ENCODE measurements at regions of chr3 and their contacts with region 1.

Region 1: GRCh38 chr3:31589228-31589627 is 56.5 kb downstream of the STT3B start:
- DNase-seq: no peak
- ATAC-seq: no peak
- H3K4me3 ChIP-seq: no peak overlapping the region
- H3K4me3 Mint-ChIP-seq: no peak overlapping the region
- H3K27ac ChIP-seq: no peak overlapping the region
- H3K27ac Mint-ChIP-seq: no peak overlapping the region
- H3K4me1 ChIP-seq: no peaks in the 10 kb centered on the region
- H3K4me1 Mint-ChIP-seq: peaks cover 52% of the 10 kb centered on the region
- H3K27me3 ChIP-seq: no peaks in the 10 kb centered on the region
- H3K27me3 Mint-ChIP-seq: no peaks in the 10 kb centered on the region
- CTCF ChIP-seq: no peak

Region 2: GRCh38 chr3:31412832-31413231 is 176.4 kb before region 1 on chr3:
- CTCF ChIA-PET with region 1: no interaction called
- POLR2A ChIA-PET with region 1: no interaction called
- intact Hi-C with region 1: no loop called
- DNase-seq: no peak
- ATAC-seq: no peak
- H3K4me3 ChIP-seq: no peak overlapping the region
- H3K4me3 Mint-ChIP-seq: no peak overlapping the region
- H3K27ac ChIP-seq: no peak overlapping the region
- H3K27ac Mint-ChIP-seq: no peak overlapping the region
- H3K4me1 ChIP-seq: no peaks in the 10 kb centered on the region
- H3K4me1 Mint-ChIP-seq: peaks cover 9% of the 10 kb centered on the region
- H3K27me3 ChIP-seq: peaks cover 0 to 2% of the 10 kb centered on the region in 2 experiments
- H3K27me3 Mint-ChIP-seq: no peaks in the 10 kb centered on the region
- CTCF ChIP-seq: no peak

Region 3: GRCh38 chr3:31575448-31575847 is 13.8 kb before region 1 on chr3:
- CTCF ChIA-PET with region 1: no interaction called
- POLR2A ChIA-PET with region 1: no interaction called
- intact Hi-C with region 1: loop called in 1 of 2 experiments (anchors 2 kb)
- DNase-seq: peak in 2 of 9 experiments; percentile 10 to 39
- ATAC-seq: peak; percentile 71
- H3K4me3 ChIP-seq: no peak overlapping the region
- H3K4me3 Mint-ChIP-seq: peak overlapping the region; percentile 20
- H3K27ac ChIP-seq: no peak overlapping the region
- H3K27ac Mint-ChIP-seq: peak overlapping the region; percentile 10
- H3K4me1 ChIP-seq: peaks cover 59% of the 10 kb centered on the region
- H3K4me1 Mint-ChIP-seq: peaks cover 71% of the 10 kb centered on the region
- H3K27me3 ChIP-seq: no peaks in the 10 kb centered on the region
- H3K27me3 Mint-ChIP-seq: no peaks in the 10 kb centered on the region
- CTCF ChIP-seq: no peak

Region 4: DNA sequence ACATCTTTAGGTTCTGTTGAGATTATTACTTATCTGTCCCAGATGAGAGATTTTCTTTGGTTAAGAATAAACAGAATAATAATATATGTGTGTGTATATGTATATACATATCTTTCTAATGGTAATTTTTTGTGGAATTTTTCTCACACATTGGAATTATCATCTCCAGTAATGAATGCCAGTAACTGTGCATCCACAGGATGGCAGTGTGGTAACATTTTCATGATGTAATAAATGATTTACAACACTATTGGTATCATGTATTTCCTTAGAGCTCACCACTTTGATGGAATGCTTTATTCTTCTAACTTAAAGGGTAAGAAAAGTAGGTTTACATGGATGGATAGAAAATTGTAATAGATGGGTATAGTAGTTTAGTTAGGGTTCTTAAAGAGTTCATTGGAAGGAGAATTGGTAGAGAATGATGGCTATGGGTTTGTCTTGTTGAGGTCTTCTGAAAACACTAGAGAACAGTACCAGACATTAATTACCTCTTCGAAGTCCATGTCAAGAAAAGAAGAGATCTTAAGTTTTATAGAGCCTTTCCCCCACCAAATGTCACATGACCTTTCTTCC is 21.6 kb after region 1 on chr3:
- CTCF ChIA-PET with region 1: no interaction called
- POLR2A ChIA-PET with region 1: no interaction called
- intact Hi-C with region 1: loop called in 1 of 2 experiments (anchors 2 kb)
- DNase-seq: peak in 2 of 9 experiments; percentile 16 to 38
- ATAC-seq: no peak
- H3K4me3 ChIP-seq: no peak overlapping the region
- H3K4me3 Mint-ChIP-seq: no peak overlapping the region
- H3K27ac ChIP-seq: no peak overlapping the region
- H3K27ac Mint-ChIP-seq: peak overlapping the region; percentile 1
- H3K4me1 ChIP-seq: no peaks in the 10 kb centered on the region
- H3K4me1 Mint-ChIP-seq: peaks cover 61% of the 10 kb centered on the region
- H3K27me3 ChIP-seq: no peaks in the 10 kb centered on the region
- H3K27me3 Mint-ChIP-seq: no peaks in the 10 kb centered on the region
- CTCF ChIP-seq: peak; percentile 40

Measured in CD8-positive, alpha-beta T cell (primary cell).